GM23248 (cell line): ENCODE measurements at regions of chr5 and their contacts with region 1.

Region 1: DNA sequence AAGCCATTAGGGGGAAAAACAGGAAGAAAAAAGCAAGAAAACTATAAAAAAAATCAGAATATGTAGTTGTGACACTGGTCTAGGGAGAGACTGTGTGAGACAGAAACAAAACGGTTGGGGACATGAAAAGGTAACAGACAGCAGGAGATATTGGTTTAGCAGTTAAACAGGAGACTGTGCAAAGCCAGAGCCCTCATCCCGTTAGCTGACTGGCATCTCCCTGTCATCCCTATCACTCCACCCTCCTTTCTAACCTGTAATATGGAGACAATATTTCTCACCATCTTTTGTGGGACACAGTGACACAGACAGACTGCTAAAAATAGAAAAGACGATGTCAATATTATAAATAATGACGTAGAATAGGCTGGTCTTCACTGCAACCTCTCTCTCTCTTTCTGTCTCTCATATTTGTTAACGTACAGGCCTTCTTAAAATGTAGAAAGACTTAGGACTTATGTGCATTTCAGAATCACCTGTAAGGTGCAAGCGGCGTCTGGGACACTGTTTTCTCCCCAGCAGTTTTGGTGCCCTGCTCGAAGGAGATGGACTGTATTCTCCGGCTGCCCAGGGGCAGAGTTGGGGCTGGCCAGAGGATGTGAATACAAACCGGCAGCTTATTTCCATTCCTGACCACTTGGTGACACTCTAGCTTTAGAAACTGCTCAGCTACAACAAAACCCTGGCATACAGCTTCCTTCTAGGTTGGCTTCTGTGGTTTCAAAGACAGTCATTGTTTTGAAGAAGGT is 190.6 kb downstream of the MAT2B start:
- DNase-seq: peak; percentile 82
- H3K4me3 ChIP-seq: no peak overlapping the region
- H3K27ac ChIP-seq: no peak overlapping the region
- H3K4me1 ChIP-seq: no peaks in the 10 kb centered on the region
- H3K27me3 ChIP-seq: no peaks in the 10 kb centered on the region

Region 2: DNA sequence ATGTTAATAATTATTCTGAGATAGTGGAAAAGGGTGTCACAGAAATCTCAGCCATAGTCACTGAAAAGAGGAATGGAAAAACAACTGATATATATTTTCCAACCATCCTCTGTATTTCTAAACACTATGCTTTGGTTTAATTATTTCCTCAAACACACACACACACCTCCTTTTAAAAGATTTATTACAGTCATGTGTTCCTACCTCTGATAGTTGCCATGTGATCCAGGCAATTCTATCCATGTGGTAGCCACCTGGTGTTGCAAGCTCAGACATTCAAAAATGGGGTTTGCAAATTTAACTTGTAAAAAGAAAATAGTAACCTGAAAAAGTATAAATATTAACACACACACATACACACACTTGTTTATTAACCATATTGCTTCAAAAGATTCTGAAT is 298.6 kb before region 1 on chr5:
- in situ Hi-C with region 1: no loop called
- DNase-seq: no peak
- H3K4me3 ChIP-seq: no peak overlapping the region
- H3K27ac ChIP-seq: no peak overlapping the region
- H3K4me1 ChIP-seq: no peaks in the 10 kb centered on the region
- H3K27me3 ChIP-seq: no peaks in the 10 kb centered on the region

Region 3: DNA sequence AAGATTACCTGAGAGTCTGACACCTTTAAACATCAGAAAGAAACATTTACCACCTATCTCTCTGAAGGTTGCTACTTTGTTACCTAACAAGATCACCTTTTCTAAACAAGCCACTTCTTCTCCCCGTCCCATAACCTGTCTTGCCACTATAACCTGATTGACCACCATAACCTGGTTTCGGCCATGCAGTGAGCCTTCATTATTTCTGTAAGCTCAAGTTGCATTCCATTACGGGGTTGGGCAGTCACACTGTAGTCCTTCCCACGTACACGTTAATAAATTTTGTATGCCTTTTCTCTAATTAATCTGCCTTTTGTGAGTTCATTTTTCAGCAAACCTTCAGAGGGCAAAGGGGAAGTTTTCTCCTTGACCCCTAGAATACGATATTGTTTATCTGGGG is 286.6 kb before region 1 on chr5:
- in situ Hi-C with region 1: no loop called
- DNase-seq: no peak
- H3K4me3 ChIP-seq: no peak overlapping the region
- H3K27ac ChIP-seq: no peak overlapping the region
- H3K4me1 ChIP-seq: peaks cover 15% of the 10 kb centered on the region
- H3K27me3 ChIP-seq: 0 out of 2 replicates have a peak, but pooled peaks cover 6% of the 10 kb centered on the region

Region 4: DNA sequence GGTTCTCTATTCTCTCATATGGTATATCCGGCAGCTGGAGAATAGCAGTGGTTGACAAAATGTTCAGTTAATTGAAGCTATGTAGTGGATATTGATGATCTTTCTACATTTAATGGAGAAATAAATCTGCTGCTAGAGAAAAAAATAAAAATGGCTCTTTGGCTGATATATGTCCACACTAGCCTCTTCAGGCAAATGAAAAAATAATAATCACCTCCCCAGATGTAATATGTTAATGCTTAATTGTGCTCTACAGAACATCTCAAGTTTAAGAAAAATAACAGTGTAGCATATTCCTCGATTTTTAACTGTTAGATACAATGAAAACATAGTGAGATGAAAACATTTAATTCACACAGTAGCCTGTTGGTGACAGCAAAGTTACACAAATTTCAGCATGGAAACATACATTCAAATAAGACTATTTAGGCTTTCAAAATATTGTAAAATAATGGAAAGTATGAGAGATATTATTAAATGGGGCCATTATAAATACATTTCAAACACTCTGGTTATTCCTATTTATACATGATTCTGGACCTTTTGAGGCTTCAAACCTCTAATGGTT is 352.4 kb after region 1 on chr5:
- in situ Hi-C with region 1: no loop called
- DNase-seq: no peak
- H3K4me3 ChIP-seq: no peak overlapping the region
- H3K27ac ChIP-seq: no peak overlapping the region
- H3K4me1 ChIP-seq: no peaks in the 10 kb centered on the region
- H3K27me3 ChIP-seq: no peaks in the 10 kb centered on the region

Region 5: GRCh38 chr5:164504141-164504772 is 808.3 kb after region 1 on chr5:
- in situ Hi-C with region 1: loop called (anchors 10 kb)
- DNase-seq: peak; percentile 62
- H3K4me3 ChIP-seq: peak overlapping the region; percentile 38
- H3K27ac ChIP-seq: no peak overlapping the region
- H3K4me1 ChIP-seq: no peaks in the 10 kb centered on the region
- H3K27me3 ChIP-seq: no peaks in the 10 kb centered on the region